ENCODE measurements at regions of chr5 and their contacts with region 1.

Region 1: DNA sequence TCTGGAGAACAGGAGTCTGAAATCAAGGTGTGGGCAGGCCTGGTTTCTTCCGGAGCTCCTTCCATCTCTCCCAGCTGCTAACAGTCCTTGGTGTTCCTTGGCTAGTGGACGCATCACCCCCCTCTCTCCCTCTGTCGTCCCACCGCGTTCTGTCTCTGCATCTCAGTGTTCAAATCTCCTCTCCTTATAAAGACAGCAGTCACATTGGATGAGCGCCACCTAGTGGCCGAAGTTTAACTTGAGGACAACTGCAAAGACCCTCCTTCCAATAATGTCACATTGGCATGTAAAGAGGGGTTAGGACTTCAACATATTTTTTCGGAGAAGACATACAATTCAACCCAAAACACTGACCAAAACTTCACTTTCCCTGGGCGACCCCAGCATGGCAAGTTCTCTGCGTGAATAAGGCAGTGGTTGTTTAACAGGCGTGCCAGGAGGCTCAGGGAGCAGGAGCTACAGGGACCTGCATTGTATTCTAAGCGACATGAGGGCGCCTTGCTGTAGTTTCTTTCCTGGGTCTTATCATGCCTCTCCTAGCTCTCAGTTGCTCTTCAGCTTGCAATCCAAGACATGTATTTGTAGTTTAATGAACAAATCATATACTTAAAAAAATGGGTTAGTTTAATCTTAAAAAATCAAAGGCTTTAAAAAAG is 27.9 kb upstream of the BASP1 start:
- DNase-seq: peak; percentile 46 to 80 (median 60)
- H3K4me3 ChIP-seq: no peak overlapping the region
- H3K27ac ChIP-seq: no peak overlapping the region
- H3K27me3 ChIP-seq: no peaks in the 10 kb centered on the region
- CTCF ChIP-seq: peak; percentile 70 to 92 (median 83)

Region 2: GRCh38 chr5:16160706-16161105 is 1028.8 kb before region 1 on chr5:
- intact Hi-C with region 1: loop called in 1 of 2 experiments (anchors 10 kb)
- DNase-seq: peak in 2 of 10 donors; percentile 18 to 30
- H3K4me3 ChIP-seq: no peak overlapping the region
- H3K27ac ChIP-seq: no peak overlapping the region
- H3K27me3 ChIP-seq: no peaks in the 10 kb centered on the region
- CTCF ChIP-seq: peak; percentile 30 to 79 (median 62)

Region 3: GRCh38 chr5:16489322-16489791 is 700.2 kb before region 1 on chr5:
- intact Hi-C with region 1: loop called in 1 of 2 experiments (anchors 10 kb)
- DNase-seq: peak in 2 of 10 donors; percentile 21 to 30
- H3K4me3 ChIP-seq: no peak overlapping the region
- H3K27ac ChIP-seq: peak overlapping the region in 39 of 59 donors; percentile 0 to 77 (median 44)
- H3K27me3 ChIP-seq: no peaks in the 10 kb centered on the region
- CTCF ChIP-seq: peak; percentile 71 to 97 (median 84)

Region 4: GRCh38 chr5:16690243-16690852 is 499.2 kb before region 1 on chr5:
- intact Hi-C with region 1: loop called in 1 of 2 experiments (anchors 5 kb)
- DNase-seq: peak in 1 of 10 donors; percentile 49
- H3K4me3 ChIP-seq: peak overlapping the region in 1 of 59 donors; percentile 3
- H3K27ac ChIP-seq: peak overlapping the region in 52 of 59 donors; percentile 1 to 82 (median 62)
- H3K27me3 ChIP-seq: no peaks in the 10 kb centered on the region
- CTCF ChIP-seq: peak; percentile 52 to 86 (median 73)

Region 5: GRCh38 chr5:16759147-16759773 is 430.2 kb before region 1 on chr5:
- intact Hi-C with region 1: no loop called
- DNase-seq: no peak
- H3K4me3 ChIP-seq: no peak overlapping the region
- H3K27ac ChIP-seq: no peak overlapping the region
- H3K27me3 ChIP-seq: no peaks in the 10 kb centered on the region
- CTCF ChIP-seq: no peak

Region 6: DNA sequence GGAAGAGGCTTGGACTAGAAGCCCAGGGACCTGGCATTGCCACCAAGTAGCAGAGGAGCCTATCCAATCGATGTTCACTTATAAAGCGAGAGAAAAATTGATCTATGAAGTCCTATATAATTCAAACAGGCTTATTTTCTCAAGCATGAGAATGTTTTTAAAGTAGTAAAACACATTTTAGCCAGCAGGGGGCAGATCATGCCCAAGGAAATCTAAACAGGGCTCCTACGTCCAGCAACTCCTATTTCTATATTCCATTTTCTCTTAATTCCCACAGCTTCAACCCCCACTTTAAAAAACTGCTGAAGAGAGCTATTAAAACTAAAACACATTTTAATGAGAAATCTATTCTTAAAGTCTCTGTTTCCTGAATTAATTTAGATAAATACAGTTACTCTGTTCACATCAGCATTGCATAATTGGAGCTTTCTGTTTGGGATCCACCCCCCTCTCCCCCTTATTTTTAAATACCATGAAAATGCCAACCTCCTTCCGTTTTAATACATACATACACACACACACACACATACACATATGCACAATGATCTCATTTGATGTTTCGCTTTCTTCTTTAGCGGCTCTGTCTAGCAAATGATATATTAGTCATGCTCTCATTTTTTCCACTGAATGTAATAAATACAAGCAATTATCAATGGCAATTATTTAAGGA is 398.3 kb before region 1 on chr5:
- intact Hi-C with region 1: loop called (anchors 2 to 5 kb)
- DNase-seq: peak in 2 of 10 donors; percentile 35 to 46
- H3K4me3 ChIP-seq: peak overlapping the region in 32 of 59 donors; percentile 0 to 54 (median 24)
- H3K27ac ChIP-seq: no peak overlapping the region
- H3K27me3 ChIP-seq: no peaks in the 10 kb centered on the region
- CTCF ChIP-seq: peak; percentile 72 to 96 (median 86)

Region 7: GRCh38 chr5:16934123-16934522 is 255.4 kb before region 1 on chr5:
- intact Hi-C with region 1: loop called in 1 of 2 experiments (anchors 10 kb)
- DNase-seq: no peak
- H3K4me3 ChIP-seq: peak overlapping the region in 43 of 59 donors; percentile 3 to 83 (median 65)
- H3K27ac ChIP-seq: no peak overlapping the region
- H3K27me3 ChIP-seq: peaks cover 0 to 90% (median 61%) of the 10 kb centered on the region in 45 donors
- CTCF ChIP-seq: peak in 55 of 56 donors; percentile 26 to 70 (median 57)

Region 8: DNA sequence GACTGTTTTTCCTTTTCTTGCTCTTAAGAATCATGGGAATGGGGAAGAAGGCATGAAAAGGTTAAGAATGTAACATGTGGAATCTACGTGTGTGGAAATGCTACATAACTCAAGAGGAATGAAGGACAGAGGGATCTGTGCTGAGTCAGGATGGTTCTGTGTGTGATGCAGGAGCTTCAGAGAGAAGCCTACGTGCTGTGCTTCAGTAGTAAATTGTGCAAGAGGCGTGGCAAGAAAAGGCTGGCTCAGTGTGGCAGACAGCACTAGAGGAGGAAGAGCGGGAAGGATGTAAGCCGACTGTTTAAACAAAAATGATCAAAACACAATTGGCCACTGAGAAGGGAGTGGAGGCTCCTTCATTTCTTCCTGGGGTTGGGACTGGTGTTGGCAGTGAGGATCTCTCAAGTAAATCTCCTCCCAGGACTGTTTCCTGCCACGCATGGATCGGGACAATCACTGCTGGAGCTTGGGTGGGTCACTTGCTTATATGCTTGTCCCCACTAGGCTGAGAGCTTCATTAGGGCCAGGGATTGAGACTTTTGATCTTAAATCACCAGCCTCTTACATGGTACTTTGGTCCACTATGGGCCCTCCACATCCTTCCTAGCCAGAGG is 31.5 kb before region 1 on chr5:
- intact Hi-C with region 1: no loop called
- DNase-seq: no peak
- H3K4me3 ChIP-seq: no peak overlapping the region
- H3K27ac ChIP-seq: no peak overlapping the region
- H3K27me3 ChIP-seq: no peaks in the 10 kb centered on the region
- CTCF ChIP-seq: no peak

Region 9: DNA sequence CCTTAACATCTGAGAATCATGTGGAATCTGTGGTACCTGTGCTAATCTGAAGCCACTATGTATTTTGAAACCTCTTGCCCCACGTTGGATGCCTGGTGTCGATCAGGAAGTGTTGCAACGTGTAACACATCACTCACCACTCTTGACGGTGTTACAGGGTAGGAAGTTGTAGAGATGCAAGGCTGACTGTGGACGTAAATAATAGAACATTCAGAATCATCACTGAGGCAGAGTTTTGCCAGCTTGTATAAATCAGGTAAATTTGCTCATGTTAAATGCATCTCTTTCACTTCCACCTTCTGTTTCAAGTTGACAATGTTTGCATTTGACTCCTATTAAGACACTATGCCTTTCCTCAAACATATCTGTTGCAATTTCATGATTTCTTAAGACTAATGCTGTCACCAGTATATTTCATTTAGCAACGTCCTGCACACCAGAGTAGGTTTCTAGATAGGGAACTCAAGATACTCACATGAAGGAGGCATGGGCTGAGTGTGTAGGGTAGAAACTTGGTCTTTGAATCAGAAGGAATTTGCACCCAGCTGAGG is 66.0 kb after region 1 on chr5:
- intact Hi-C with region 1: no loop called
- DNase-seq: no peak
- H3K4me3 ChIP-seq: no peak overlapping the region
- H3K27ac ChIP-seq: peak overlapping the region in 13 of 59 donors; percentile 1 to 57 (median 38)
- H3K27me3 ChIP-seq: no peaks in the 10 kb centered on the region
- CTCF ChIP-seq: no peak

Region 10: GRCh38 chr5:17441351-17441750 is 251.8 kb after region 1 on chr5:
- intact Hi-C with region 1: no loop called
- DNase-seq: no peak
- H3K4me3 ChIP-seq: no peak overlapping the region
- H3K27ac ChIP-seq: no peak overlapping the region
- H3K27me3 ChIP-seq: no peaks in the 10 kb centered on the region
- CTCF ChIP-seq: no peak

Measured in dorsolateral prefrontal cortex (tissue), 120 donors.